ENCODE measurements at regions of chr16 and their contacts with region 1.

Region 1: GRCh38 chr16:11094072-11094856 is 149.9 kb downstream of the CLEC16A start:
- DNase-seq: peak in 2 of 9 donors; percentile 7 to 68
- ATAC-seq: peak; percentile 53
- H3K4me3 ChIP-seq: no peak overlapping the region
- H3K4me3 Mint-ChIP-seq: peak overlapping the region in 9 of 10 donors; percentile 29 to 71 (median 63)
- H3K27ac ChIP-seq: peak overlapping the region; percentile 55
- H3K27ac Mint-ChIP-seq: peak overlapping the region; percentile 67 to 92 (median 85)
- H3K4me1 ChIP-seq: peaks cover 19 to 33% of the 10 kb centered on the region in 2 donors
- H3K4me1 Mint-ChIP-seq: peaks cover 21 to 70% (median 42%) of the 10 kb centered on the region in 7 donors
- H3K27me3 ChIP-seq: no peaks in the 10 kb centered on the region
- H3K27me3 Mint-ChIP-seq: no peaks in the 10 kb centered on the region

Region 2: GRCh38 chr16:11076259-11077018 is 17.8 kb before region 1 on chr16:
- CTCF ChIA-PET with region 1: no interaction called
- POLR2A ChIA-PET with region 1: no interaction called
- intact Hi-C with region 1: loop called in 1 of 2 experiments (anchors 1 kb)
- DNase-seq: peak in 1 of 9 donors; percentile 75
- ATAC-seq: peak; percentile 65
- H3K4me3 ChIP-seq: no peak overlapping the region
- H3K4me3 Mint-ChIP-seq: peak overlapping the region in 1 of 10 donors; percentile 62
- H3K27ac ChIP-seq: no peak overlapping the region
- H3K27ac Mint-ChIP-seq: peak overlapping the region in 7 of 9 donors; percentile 24 to 83 (median 66)
- H3K4me1 ChIP-seq: peaks cover 5 to 24% of the 10 kb centered on the region in 2 donors
- H3K4me1 Mint-ChIP-seq: peaks cover 27 to 91% (median 54%) of the 10 kb centered on the region in 7 donors
- H3K27me3 ChIP-seq: no peaks in the 10 kb centered on the region
- H3K27me3 Mint-ChIP-seq: no peaks in the 10 kb centered on the region

Region 3: GRCh38 chr16:11114366-11115164 is 20.3 kb after region 1 on chr16:
- CTCF ChIA-PET with region 1: no interaction called
- POLR2A ChIA-PET with region 1: no interaction called
- intact Hi-C with region 1: loop called in 1 of 2 experiments (anchors 2 kb)
- DNase-seq: peak in 7 of 9 donors; percentile 14 to 43 (median 31)
- ATAC-seq: peak; percentile 77
- H3K4me3 ChIP-seq: peak overlapping the region; percentile 31
- H3K4me3 Mint-ChIP-seq: peak overlapping the region; percentile 51 to 83 (median 64)
- H3K27ac ChIP-seq: no peak overlapping the region
- H3K27ac Mint-ChIP-seq: peak overlapping the region; percentile 36 to 89 (median 65)
- H3K4me1 ChIP-seq: peaks cover 17 to 26% of the 10 kb centered on the region in 2 donors
- H3K4me1 Mint-ChIP-seq: peaks cover 22 to 53% (median 33%) of the 10 kb centered on the region in 7 donors
- H3K27me3 ChIP-seq: no peaks in the 10 kb centered on the region
- H3K27me3 Mint-ChIP-seq: no peaks in the 10 kb centered on the region

Region 4: DNA sequence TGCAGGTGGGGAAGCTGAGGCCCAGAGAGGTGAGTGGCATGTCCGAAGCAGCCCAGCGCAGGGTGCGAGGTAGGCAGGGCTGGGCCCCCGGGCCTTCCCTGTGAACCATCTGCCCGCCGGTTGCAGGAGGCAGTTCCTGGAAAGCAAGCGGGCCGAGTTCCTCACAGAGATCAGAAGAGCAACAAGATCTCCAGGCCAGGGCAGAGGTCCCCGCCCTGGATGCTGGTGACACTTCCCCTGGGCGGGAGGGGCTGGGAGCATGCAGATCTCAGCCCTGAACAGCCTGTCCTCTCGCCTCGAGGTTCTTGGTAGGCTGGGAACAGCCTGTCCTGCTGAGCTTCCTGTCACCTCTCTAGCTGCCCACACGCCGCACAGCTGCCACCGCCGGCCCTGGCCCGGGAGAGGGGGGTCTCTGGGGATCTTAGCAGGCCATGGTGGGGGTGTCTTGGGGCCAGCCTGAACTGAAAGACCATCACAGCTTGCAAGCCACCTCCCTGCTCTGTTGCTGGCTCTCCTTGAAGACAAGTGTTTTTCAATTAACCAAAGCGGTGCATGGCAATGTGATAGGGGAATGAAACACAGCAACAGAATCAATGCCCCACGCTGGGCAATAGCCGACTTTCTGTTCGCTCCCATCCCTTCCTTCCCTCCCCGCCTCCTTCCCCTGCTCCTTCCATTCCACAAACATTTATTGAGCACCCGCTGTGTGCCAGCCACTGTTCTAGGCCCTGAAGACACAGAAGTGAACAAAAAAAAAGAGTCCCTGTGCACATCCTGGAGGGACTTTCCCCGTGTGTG is 130.0 kb after region 1 on chr16:
- CTCF ChIA-PET with region 1: no interaction called
- POLR2A ChIA-PET with region 1: no interaction called
- intact Hi-C with region 1: loop called in 1 of 2 experiments (anchors 2 kb)
- DNase-seq: peak; percentile 36 to 67 (median 48)
- ATAC-seq: peak; percentile 68
- H3K4me3 ChIP-seq: peak overlapping the region; percentile 49
- H3K4me3 Mint-ChIP-seq: peak overlapping the region; percentile 78 to 87 (median 80)
- H3K27ac ChIP-seq: peak overlapping the region; percentile 91
- H3K27ac Mint-ChIP-seq: peak overlapping the region; percentile 97 to 99 (median 98)
- H3K4me1 ChIP-seq: peaks cover 30 to 36% of the 10 kb centered on the region in 2 donors
- H3K4me1 Mint-ChIP-seq: peaks cover 37 to 73% (median 52%) of the 10 kb centered on the region in 7 donors
- H3K27me3 ChIP-seq: no peaks in the 10 kb centered on the region
- H3K27me3 Mint-ChIP-seq: no peaks in the 10 kb centered on the region

Region 5: GRCh38 chr16:11232852-11233726 is 138.8 kb after region 1 on chr16:
- CTCF ChIA-PET with region 1: no interaction called
- POLR2A ChIA-PET with region 1: no interaction called
- intact Hi-C with region 1: loop called in 1 of 2 experiments (anchors 2 kb)
- DNase-seq: peak; percentile 64 to 90 (median 85)
- ATAC-seq: peak; percentile 89
- H3K4me3 ChIP-seq: peak overlapping the region; percentile 50
- H3K4me3 Mint-ChIP-seq: peak overlapping the region; percentile 60 to 84 (median 76)
- H3K27ac ChIP-seq: peak overlapping the region; percentile 89
- H3K27ac Mint-ChIP-seq: peak overlapping the region; percentile 82 to 98 (median 97)
- H3K4me1 ChIP-seq: peaks cover 34 to 42% of the 10 kb centered on the region in 2 donors
- H3K4me1 Mint-ChIP-seq: peaks cover 45 to 86% (median 64%) of the 10 kb centered on the region in 7 donors
- H3K27me3 ChIP-seq: no peaks in the 10 kb centered on the region
- H3K27me3 Mint-ChIP-seq: no peaks in the 10 kb centered on the region